Colonic mucosa (tissue), 4 donors: ENCODE measurements at regions of chr1 and their contacts with region 1.

Region 1: GRCh38 chr1:94863919-94864318 is 43.8 kb downstream of the SLC44A3 start:
- DNase-seq: peak; percentile 29
- H3K4me3 ChIP-seq: no peak overlapping the region
- H3K27ac ChIP-seq: peak overlapping the region; percentile 70
- H3K4me1 ChIP-seq: no peaks in the 10 kb centered on the region
- H3K27me3 ChIP-seq: no peaks in the 10 kb centered on the region
- CTCF ChIP-seq: no peak

Region 2: GRCh38 chr1:94532077-94532476 is 331.8 kb before region 1 on chr1:
- intact Hi-C with region 1: no loop called
- DNase-seq: no peak
- H3K4me3 ChIP-seq: no peak overlapping the region
- H3K27ac ChIP-seq: no peak overlapping the region
- H3K4me1 ChIP-seq: no peaks in the 10 kb centered on the region
- H3K27me3 ChIP-seq: no peaks in the 10 kb centered on the region
- CTCF ChIP-seq: no peak

Region 3: GRCh38 chr1:94926915-94927404 is 63.0 kb after region 1 on chr1 and contains the start of gene CNN3:
- intact Hi-C with region 1: loop called (anchors 5 kb)
- DNase-seq: peak; percentile 93
- H3K4me3 ChIP-seq: peak within 1 kb of the TSS; percentile 74
- H3K27ac ChIP-seq: peak within 1 kb of the TSS; percentile 98
- H3K4me1 ChIP-seq: no peaks in the 10 kb centered on the region
- H3K27me3 ChIP-seq: no peaks in the 10 kb centered on the region
- CTCF ChIP-seq: no peak
- total RNA-seq, gene CNN3: 117 to 164 TPM